Aorta (tissue), 5 donors: ENCODE measurements at regions of chr1 and their contacts with region 1.

Region 1: DNA sequence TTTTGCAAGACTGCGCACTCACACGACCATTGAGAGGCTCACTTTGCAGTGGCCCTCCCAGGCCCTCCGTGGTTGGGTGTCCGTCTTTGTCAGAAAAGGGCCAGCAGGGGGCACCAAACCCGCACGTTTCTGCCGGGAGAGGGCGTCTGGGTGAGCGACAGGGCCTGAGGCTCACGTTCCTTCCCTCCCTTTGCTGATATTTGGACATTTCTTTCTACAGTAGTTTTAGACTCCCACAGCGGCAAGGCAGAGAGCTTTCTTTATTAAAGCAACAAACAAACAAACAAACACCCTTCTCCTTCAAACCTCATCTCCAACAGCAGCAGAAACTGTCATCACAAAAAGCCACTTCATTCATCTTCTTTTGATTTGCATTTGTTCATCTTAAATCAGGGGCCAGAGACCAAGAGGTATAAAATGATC is 79.2 kb upstream of the WDR26 start:
- DNase-seq: peak; percentile 89 to 96
- ATAC-seq: peak; percentile 86
- H3K4me3 ChIP-seq: no peak overlapping the region
- H3K27ac ChIP-seq: no peak overlapping the region
- H3K4me1 ChIP-seq: no peaks in the 10 kb centered on the region
- H3K27me3 ChIP-seq: no peaks in the 10 kb centered on the region

Region 2: GRCh38 chr1:224368409-224368808 is 145.4 kb before region 1 on chr1:
- intact Hi-C with region 1: no loop called
- DNase-seq: no peak
- ATAC-seq: no peak
- H3K4me3 ChIP-seq: no peak overlapping the region
- H3K27ac ChIP-seq: no peak overlapping the region
- H3K4me1 ChIP-seq: no peaks in the 10 kb centered on the region
- H3K27me3 ChIP-seq: no peaks in the 10 kb centered on the region

Region 3: GRCh38 chr1:224851210-224851847 is 337.5 kb after region 1 on chr1:
- intact Hi-C with region 1: loop called (anchors 2 to 5 kb)
- DNase-seq: peak; percentile 55 to 77
- ATAC-seq: no peak
- H3K4me3 ChIP-seq: no peak overlapping the region
- H3K27ac ChIP-seq: no peak overlapping the region
- H3K4me1 ChIP-seq: no peaks in the 10 kb centered on the region
- H3K27me3 ChIP-seq: no peaks in the 10 kb centered on the region

Region 4: GRCh38 chr1:224922404-224923164 is 408.8 kb after region 1 on chr1:
- intact Hi-C with region 1: loop called in 1 of 2 experiments (anchors 10 kb)
- DNase-seq: no peak
- ATAC-seq: no peak
- H3K4me3 ChIP-seq: no peak overlapping the region
- H3K27ac ChIP-seq: no peak overlapping the region
- H3K4me1 ChIP-seq: no peaks in the 10 kb centered on the region
- H3K27me3 ChIP-seq: no peaks in the 10 kb centered on the region